Activated CD4-positive, alpha-beta T cell treated with anti-CD3 and anti-CD28 coated beads for 36 hours (primary cell): ENCODE measurements at regions of chrX and their contacts with region 1.

Region 1: DNA sequence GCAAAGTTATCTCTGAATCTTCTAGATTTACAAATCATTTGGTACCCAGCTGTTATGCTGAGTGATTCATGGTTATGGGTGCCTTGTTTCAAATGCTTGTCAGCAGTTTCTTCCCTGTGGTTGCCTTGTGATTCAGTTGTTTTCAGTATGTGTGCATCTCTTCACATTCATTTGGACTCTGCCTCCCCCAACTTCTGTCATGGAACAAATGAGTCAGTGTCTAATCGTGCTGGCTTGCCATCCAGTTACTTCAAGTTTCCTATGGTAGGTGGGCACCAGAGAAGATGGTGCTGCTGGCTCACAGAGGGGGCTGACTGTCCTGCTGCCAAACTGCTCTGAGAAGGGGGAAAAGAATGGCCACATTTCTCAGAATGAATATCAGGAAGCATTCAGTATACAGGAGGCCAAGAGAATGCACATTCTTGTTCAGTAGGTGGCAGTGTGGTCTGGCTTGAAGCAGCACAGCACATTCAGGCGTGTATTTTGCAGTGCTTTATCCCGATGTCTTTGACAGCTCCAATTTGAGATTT is 260.9 kb downstream of the GLUD2 start:
- DNase-seq: peak; percentile 80
- ATAC-seq: peak; percentile 86
- H3K4me3 Mint-ChIP-seq: peak overlapping the region; percentile 49
- H3K27ac Mint-ChIP-seq: peak overlapping the region; percentile 85
- H3K4me1 Mint-ChIP-seq: peaks cover 23% of the 10 kb centered on the region
- H3K27me3 Mint-ChIP-seq: no peaks in the 10 kb centered on the region

Region 2: GRCh38 chrX:120485638-120486520 is 822.5 kb before region 1 on chrX:
- CTCF ChIA-PET with region 1: no interaction called
- POLR2A ChIA-PET with region 1: no interaction called
- intact Hi-C with region 1: loop called (anchors 5 to 10 kb)
- DNase-seq: peak; percentile 64
- ATAC-seq: peak; percentile 82
- H3K4me3 Mint-ChIP-seq: peak overlapping the region; percentile 66
- H3K27ac Mint-ChIP-seq: peak overlapping the region; percentile 87
- H3K4me1 Mint-ChIP-seq: peaks cover 22% of the 10 kb centered on the region
- H3K27me3 Mint-ChIP-seq: no peaks in the 10 kb centered on the region

Region 3: GRCh38 chrX:120560842-120561633 is 747.3 kb before region 1 on chrX and contains the start of gene CUL4B:
- CTCF ChIA-PET with region 1: no interaction called
- POLR2A ChIA-PET with region 1: no interaction called
- intact Hi-C with region 1: loop called in 1 of 2 experiments (anchors 10 kb)
- DNase-seq: peak; percentile 95
- ATAC-seq: peak; percentile 86
- H3K4me3 Mint-ChIP-seq: peak within 1 kb of the TSS; percentile 90
- H3K27ac Mint-ChIP-seq: peak within 1 kb of the TSS; percentile 95
- H3K4me1 Mint-ChIP-seq: peaks cover 21% of the 10 kb centered on the region
- H3K27me3 Mint-ChIP-seq: no peaks in the 10 kb centered on the region
- total RNA-seq, gene CUL4B: 49.2 to 49.6 TPM

Region 4: GRCh38 chrX:120697053-120697452 is 611.3 kb before region 1 on chrX:
- CTCF ChIA-PET with region 1: no interaction called
- POLR2A ChIA-PET with region 1: no interaction called
- intact Hi-C with region 1: loop called in 1 of 2 experiments (anchors 5 kb)
- DNase-seq: peak; percentile 64
- ATAC-seq: peak; percentile 91
- H3K4me3 Mint-ChIP-seq: peak overlapping the region; percentile 12
- H3K27ac Mint-ChIP-seq: peak overlapping the region; percentile 91
- H3K4me1 Mint-ChIP-seq: peaks cover 18% of the 10 kb centered on the region
- H3K27me3 Mint-ChIP-seq: no peaks in the 10 kb centered on the region

Region 5: DNA sequence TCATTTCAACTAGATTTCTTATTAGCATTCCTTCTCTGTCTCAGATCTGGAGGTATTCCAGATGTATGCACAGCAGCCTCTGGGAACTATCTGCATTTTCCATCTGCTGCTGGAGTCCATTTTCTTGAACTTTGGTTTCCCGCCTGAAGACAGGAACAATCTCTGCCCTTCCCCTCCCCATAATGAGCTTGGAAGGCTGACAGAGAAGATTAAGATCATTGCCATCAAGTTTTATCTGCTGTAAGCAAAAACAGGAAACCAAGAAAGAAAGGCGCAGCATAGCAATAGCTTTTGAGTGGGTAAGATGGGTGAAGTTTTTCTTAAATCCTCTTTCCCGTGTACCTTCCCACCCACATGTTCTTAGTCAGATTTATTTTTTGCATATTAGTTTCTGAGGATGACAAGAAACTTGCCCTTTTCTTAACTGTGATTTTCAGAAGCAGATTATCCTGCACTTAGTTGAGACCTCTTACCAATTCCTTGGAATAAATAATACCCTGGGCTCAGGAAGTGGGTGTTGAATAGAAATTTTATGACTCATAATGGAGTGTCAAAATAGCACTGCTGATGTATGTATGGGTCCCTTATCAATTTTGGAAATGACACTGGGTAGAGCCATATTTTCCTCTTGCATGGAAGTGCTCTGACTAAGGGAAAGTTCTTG is 511.0 kb before region 1 on chrX:
- CTCF ChIA-PET with region 1: no interaction called
- POLR2A ChIA-PET with region 1: interaction called, 4 read pairs
- intact Hi-C with region 1: loop called (anchors 1 to 2 kb)
- DNase-seq: no peak
- ATAC-seq: peak; percentile 76
- H3K4me3 Mint-ChIP-seq: no peak overlapping the region
- H3K27ac Mint-ChIP-seq: peak overlapping the region; percentile 86
- H3K4me1 Mint-ChIP-seq: peaks cover 79% of the 10 kb centered on the region
- H3K27me3 Mint-ChIP-seq: no peaks in the 10 kb centered on the region

Region 6: GRCh38 chrX:121160987-121161386 is 147.4 kb before region 1 on chrX:
- CTCF ChIA-PET with region 1: no interaction called
- POLR2A ChIA-PET with region 1: no interaction called
- intact Hi-C with region 1: loop called (anchors 1 to 2 kb)
- DNase-seq: no peak
- ATAC-seq: peak; percentile 79
- H3K4me3 Mint-ChIP-seq: peak overlapping the region; percentile 50
- H3K27ac Mint-ChIP-seq: peak overlapping the region; percentile 89
- H3K4me1 Mint-ChIP-seq: peaks cover 46% of the 10 kb centered on the region
- H3K27me3 Mint-ChIP-seq: peaks cover 3% of the 10 kb centered on the region

Region 7: DNA sequence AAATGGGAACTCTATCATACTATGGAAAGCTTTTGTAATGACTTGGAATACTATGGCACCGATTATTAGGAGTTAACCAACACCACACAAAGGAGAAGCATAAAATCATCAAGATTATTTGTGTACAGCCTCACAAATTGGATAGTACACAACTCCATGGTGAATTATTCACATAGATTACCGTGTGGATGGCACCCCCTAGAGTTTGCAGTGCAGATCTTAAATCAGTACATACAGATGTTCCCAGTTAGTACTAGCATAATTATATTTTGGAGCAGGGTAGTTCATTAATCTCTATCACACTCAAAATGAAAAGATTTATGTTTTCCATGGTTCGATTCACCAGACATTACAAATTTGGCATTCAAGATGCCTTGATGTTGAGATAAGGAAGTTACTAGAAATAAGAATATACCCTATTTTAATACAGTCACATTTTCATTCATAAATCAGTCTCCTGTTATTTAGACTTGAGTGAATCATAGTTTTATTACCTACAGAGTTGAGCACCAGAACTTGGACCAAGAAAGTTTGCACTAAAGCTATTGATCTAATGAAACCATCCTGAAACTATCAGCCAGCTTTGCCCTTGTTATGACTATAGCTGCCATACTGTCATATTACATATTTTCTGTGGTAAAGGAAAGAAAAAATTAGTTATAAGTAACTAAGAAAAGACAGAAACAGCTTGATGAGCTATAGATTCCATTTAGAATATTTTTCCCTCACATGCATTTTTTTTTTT is 270.8 kb after region 1 on chrX:
- CTCF ChIA-PET with region 1: no interaction called
- POLR2A ChIA-PET with region 1: no interaction called
- intact Hi-C with region 1: loop called (anchors 2 to 5 kb)
- DNase-seq: peak; percentile 43
- ATAC-seq: peak; percentile 64
- H3K4me3 Mint-ChIP-seq: no peak overlapping the region
- H3K27ac Mint-ChIP-seq: no peak overlapping the region
- H3K4me1 Mint-ChIP-seq: peaks cover 10% of the 10 kb centered on the region
- H3K27me3 Mint-ChIP-seq: no peaks in the 10 kb centered on the region